ENCODE measurements at regions of chr11 and their contacts with region 1.

Region 1: DNA sequence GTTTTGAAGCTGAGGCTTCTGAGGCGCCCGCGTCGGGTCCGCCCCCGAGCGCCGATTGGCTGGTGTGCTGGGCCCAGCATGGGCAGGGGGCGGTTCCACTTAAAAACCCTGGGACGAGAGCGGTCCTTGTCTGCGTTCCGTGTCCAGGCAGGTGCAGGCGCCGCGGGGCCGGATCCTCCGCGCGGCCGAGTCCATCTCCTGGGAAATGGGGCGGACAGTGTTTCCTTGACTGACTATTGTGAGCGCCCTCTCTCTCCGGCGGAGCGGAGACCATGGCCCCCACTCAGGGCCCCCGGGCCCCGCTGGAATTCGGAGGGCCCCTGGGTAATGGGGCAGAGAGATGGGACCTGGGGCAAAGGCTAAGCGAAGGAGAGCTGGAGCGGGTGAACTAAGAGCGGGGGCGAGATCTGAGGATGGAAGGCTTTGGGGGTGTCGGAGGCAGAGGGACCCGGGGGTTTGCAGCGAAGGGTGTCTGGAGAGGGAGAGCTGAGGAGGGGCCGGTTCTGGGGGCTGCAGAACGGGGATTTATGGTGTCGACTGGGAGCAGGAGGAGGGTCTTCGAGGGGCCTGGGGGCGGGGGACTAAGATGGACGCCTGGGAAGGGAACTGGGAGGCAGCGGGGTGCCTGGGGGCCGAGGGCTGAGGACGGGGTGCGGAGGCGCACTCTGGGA is at the start of gene TM7SF2:
- DNase-seq: peak; percentile 98
- ATAC-seq: peak; percentile 77
- H3K4me3 Mint-ChIP-seq: peak within 1 kb of the TSS; percentile 86
- H3K27ac Mint-ChIP-seq: peak within 1 kb of the TSS; percentile 84
- H3K4me1 Mint-ChIP-seq: peaks cover 43% of the 10 kb centered on the region
- H3K27me3 Mint-ChIP-seq: no peaks in the 10 kb centered on the region
- CTCF ChIP-seq: no peak
- total RNA-seq, gene TM7SF2: 12.4 to 17.5 TPM

Region 2: GRCh38 chr11:64960719-64961118 is 151.2 kb before region 1 on chr11:
- CTCF ChIA-PET with region 1: no interaction called
- POLR2A ChIA-PET with region 1: no interaction called
- intact Hi-C with region 1: no loop called
- DNase-seq: no peak
- ATAC-seq: no peak
- H3K4me3 Mint-ChIP-seq: no peak overlapping the region
- H3K27ac Mint-ChIP-seq: no peak overlapping the region
- H3K4me1 Mint-ChIP-seq: peaks cover 4% of the 10 kb centered on the region
- H3K27me3 Mint-ChIP-seq: peaks cover 2% of the 10 kb centered on the region
- CTCF ChIP-seq: no peak

Region 3: GRCh38 chr11:64990222-64990923 is 121.5 kb before region 1 on chr11:
- CTCF ChIA-PET with region 1: no interaction called
- POLR2A ChIA-PET with region 1: no interaction called
- intact Hi-C with region 1: no loop called
- DNase-seq: no peak
- ATAC-seq: no peak
- H3K4me3 Mint-ChIP-seq: no peak overlapping the region
- H3K27ac Mint-ChIP-seq: no peak overlapping the region
- H3K4me1 Mint-ChIP-seq: peaks cover 6% of the 10 kb centered on the region
- H3K27me3 Mint-ChIP-seq: peaks cover 8% of the 10 kb centered on the region
- CTCF ChIP-seq: no peak

Region 4: DNA sequence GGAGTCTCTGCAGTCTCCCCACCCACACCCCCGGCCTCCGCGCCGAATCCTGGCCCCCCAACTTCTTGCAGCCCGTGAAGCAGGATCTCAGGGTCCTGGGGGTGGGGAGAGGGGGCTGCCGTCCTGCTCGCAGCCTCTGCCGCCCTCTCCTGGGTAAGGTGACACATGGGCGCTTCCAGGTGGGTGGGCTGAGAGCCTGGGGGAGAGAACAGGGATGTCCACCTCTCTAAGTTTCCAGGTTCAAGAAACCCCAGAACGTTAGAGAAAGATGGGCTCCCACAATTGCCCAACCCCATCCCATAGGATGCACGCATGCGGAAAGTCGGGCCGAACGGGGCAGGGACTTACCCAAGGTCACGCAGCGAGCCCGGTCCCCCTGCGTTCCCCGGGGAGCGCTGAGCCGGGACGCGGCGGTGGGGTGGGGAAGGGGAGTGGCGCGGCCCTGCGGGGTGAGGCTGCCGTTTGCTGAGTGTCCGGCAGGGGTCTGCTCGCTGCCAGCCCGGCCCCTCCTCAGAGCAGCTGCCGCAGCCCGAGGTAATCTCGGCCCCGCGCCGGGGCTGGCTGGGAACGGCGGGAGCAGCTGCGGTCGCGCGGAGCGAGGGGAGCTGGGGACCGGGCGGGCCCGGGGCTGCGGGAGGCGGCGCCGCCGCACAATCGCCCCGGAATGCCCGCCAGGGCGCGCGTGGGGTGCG is 69.1 kb after region 1 on chr11:
- CTCF ChIA-PET with region 1: interaction called, 35 read pairs
- POLR2A ChIA-PET with region 1: interaction called, 5 read pairs
- intact Hi-C with region 1: no loop called
- DNase-seq: peak; percentile 63
- ATAC-seq: peak; percentile 76
- H3K4me3 Mint-ChIP-seq: peak overlapping the region; percentile 80
- H3K27ac Mint-ChIP-seq: peak overlapping the region; percentile 81
- H3K4me1 Mint-ChIP-seq: peaks cover 17% of the 10 kb centered on the region
- H3K27me3 Mint-ChIP-seq: no peaks in the 10 kb centered on the region
- CTCF ChIP-seq: peak; percentile 63

Region 5: DNA sequence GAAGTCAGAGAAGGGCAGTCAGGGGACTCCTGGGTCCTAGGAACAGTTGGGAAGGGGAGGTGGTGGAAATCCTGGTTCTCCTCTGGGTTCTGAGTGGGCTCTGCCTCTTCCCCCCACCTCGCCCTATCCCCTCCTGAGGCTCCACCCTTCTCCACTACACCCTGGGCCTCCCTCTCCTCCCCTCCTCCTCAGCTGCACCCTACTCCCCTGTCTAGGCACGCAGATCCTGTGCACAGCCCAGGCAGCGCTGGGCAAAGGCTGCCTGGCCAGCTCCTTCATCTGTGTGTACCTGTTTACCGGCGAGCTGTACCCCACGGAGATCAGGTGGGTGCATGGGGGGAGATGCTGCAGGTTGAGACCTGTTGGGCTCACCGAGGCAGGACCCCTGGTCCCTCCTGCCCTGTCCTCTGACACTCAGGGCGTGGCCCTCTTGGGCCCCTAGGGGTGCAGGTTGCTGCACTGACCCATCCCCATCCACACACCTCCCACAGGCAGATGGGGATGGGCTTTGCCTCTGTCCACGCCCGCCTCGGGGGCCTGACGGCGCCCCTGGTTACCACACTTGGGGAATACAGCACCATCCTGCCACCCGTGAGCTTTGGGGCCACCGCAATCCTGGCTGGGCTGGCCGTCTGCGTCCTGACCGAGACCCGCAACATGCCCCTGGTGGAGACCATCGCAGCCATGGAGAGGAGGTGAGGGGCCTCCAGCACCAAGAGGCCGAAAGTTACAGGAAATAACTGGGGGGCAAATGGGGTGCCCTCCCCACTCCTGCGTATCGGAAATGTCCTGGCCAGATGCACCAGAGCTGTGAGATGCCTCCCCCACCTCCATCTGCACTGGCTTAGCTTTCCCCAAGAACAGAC is 124.5 kb after region 1 on chr11:
- CTCF ChIA-PET with region 1: no interaction called
- POLR2A ChIA-PET with region 1: no interaction called
- intact Hi-C with region 1: no loop called
- DNase-seq: no peak
- ATAC-seq: no peak
- H3K4me3 Mint-ChIP-seq: no peak overlapping the region
- H3K27ac Mint-ChIP-seq: no peak overlapping the region
- H3K4me1 Mint-ChIP-seq: no peaks in the 10 kb centered on the region
- H3K27me3 Mint-ChIP-seq: no peaks in the 10 kb centered on the region
- CTCF ChIP-seq: no peak